CD4-positive, alpha-beta memory T cell (primary cell): ENCODE measurements at regions of chr9 and their contacts with region 1.

Region 1: GRCh38 chr9:130010151-130010988 is 32.6 kb downstream of the FNBP1 start:
- DNase-seq: peak; percentile 64 to 93 (median 74)
- H3K4me3 ChIP-seq: no peak overlapping the region
- H3K4me3 Mint-ChIP-seq: peak overlapping the region; percentile 32 to 85 (median 52)
- H3K27ac ChIP-seq: peak overlapping the region; percentile 88
- H3K27ac Mint-ChIP-seq: peak overlapping the region; percentile 93 to 100 (median 98)
- H3K4me1 ChIP-seq: peaks cover 95% of the 10 kb centered on the region
- H3K4me1 Mint-ChIP-seq: peaks cover 49 to 89% (median 67%) of the 10 kb centered on the region in 4 donors
- H3K27me3 ChIP-seq: no peaks in the 10 kb centered on the region
- H3K27me3 Mint-ChIP-seq: no peaks in the 10 kb centered on the region

Region 2: GRCh38 chr9:129995409-129996160 is 14.8 kb before region 1 on chr9:
- CTCF ChIA-PET with region 1: interaction called, 8 read pairs
- POLR2A ChIA-PET with region 1: interaction called, 12 read pairs
- intact Hi-C with region 1: loop called (anchors 1 kb)
- DNase-seq: peak in 2 of 5 donors; percentile 20 to 59
- H3K4me3 ChIP-seq: peak overlapping the region in 1 of 2 donors; percentile 15
- H3K4me3 Mint-ChIP-seq: peak overlapping the region; percentile 66 to 82 (median 76)
- H3K27ac ChIP-seq: peak overlapping the region; percentile 64
- H3K27ac Mint-ChIP-seq: peak overlapping the region; percentile 93 to 98 (median 96)
- H3K4me1 ChIP-seq: peaks cover 79% of the 10 kb centered on the region
- H3K4me1 Mint-ChIP-seq: peaks cover 55 to 87% (median 71%) of the 10 kb centered on the region in 4 donors
- H3K27me3 ChIP-seq: no peaks in the 10 kb centered on the region
- H3K27me3 Mint-ChIP-seq: no peaks in the 10 kb centered on the region

Region 3: DNA sequence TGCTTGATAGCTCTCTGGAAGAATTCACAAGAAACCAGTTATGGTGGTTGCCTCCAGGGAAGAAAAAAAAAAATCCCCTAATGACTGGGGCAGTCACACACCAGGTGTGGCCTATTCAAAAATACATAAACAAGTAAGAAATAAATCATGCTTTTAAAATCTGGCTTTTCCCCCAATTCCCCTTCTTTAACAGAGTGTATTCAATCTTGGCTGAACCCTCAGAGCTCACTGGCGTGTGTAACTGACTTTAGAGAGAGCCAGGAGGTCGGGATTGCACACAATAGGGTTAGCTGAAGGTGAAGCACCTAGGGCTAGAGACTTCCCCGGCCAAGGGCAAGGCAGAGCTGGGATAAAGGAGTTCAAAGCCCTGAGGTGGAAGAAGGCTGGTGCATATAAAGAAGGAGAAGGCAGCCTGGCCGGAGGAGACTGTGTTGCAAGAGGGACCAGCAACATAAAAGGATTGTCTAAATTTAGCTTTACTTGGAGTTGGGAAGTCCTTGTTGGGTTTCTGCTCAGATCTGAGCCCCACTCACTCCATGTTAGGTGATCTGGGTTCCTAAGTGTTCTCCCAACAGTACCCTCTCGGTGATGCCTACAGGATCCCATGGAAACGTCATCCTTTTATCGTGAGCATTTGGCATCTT is 12.9 kb after region 1 on chr9:
- CTCF ChIA-PET with region 1: no interaction called
- POLR2A ChIA-PET with region 1: interaction called, 6 read pairs
- intact Hi-C with region 1: loop called (anchors 2 kb)
- DNase-seq: no peak
- H3K4me3 ChIP-seq: no peak overlapping the region
- H3K4me3 Mint-ChIP-seq: peak overlapping the region in 7 of 8 donors; percentile 11 to 70 (median 59)
- H3K27ac ChIP-seq: peak overlapping the region; percentile 39
- H3K27ac Mint-ChIP-seq: peak overlapping the region; percentile 73 to 95 (median 87)
- H3K4me1 ChIP-seq: peaks cover 92% of the 10 kb centered on the region
- H3K4me1 Mint-ChIP-seq: peaks cover 67 to 96% (median 79%) of the 10 kb centered on the region in 4 donors
- H3K27me3 ChIP-seq: no peaks in the 10 kb centered on the region
- H3K27me3 Mint-ChIP-seq: no peaks in the 10 kb centered on the region

Region 4: DNA sequence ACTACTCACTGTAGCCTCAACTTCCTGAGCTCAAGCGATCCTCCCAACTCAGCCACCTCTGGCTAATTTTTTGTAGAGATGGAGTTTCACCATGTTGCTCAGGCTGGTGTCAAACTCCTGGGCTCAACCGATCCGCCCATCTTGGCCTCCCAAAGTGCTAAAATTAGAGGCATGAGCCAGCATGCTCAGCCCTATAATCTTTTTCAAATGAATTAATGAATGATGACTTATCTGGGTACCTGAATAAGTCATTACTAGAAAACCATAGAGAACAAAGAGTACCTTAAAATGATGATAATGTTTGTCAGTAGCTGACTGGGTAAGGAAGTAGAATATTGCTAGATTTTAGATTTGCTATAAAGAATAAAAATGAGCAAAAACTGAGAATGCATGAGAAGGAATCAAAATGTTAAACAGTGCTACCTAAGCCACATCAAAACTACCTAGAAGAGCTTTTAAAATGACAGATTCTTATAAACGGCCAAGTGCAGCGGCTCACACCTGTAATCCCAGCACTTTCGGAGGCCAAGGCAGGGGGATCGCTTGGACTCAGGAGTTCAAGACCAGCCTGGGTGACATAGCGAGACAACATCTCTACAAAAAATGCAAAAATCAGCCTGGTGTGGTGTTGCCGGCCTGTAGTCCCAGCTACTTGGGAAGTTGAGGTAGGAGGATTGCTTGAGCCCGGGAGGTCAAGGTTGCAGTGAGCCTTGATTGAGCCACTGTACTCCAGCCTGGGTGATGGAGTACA is 19.0 kb after region 1 on chr9:
- CTCF ChIA-PET with region 1: interaction called, 4 read pairs
- POLR2A ChIA-PET with region 1: interaction called, 10 read pairs
- intact Hi-C with region 1: no loop called
- DNase-seq: no peak
- H3K4me3 ChIP-seq: no peak overlapping the region
- H3K4me3 Mint-ChIP-seq: peak overlapping the region; percentile 68 to 79 (median 72)
- H3K27ac ChIP-seq: peak overlapping the region; percentile 77
- H3K27ac Mint-ChIP-seq: peak overlapping the region; percentile 58 to 99 (median 91)
- H3K4me1 ChIP-seq: peaks cover 94% of the 10 kb centered on the region
- H3K4me1 Mint-ChIP-seq: peaks cover 68 to 96% (median 82%) of the 10 kb centered on the region in 4 donors
- H3K27me3 ChIP-seq: no peaks in the 10 kb centered on the region
- H3K27me3 Mint-ChIP-seq: no peaks in the 10 kb centered on the region